Mammary epithelial cell (primary cell): ENCODE measurements at regions of chr3 and their contacts with region 1.

Region 1: DNA sequence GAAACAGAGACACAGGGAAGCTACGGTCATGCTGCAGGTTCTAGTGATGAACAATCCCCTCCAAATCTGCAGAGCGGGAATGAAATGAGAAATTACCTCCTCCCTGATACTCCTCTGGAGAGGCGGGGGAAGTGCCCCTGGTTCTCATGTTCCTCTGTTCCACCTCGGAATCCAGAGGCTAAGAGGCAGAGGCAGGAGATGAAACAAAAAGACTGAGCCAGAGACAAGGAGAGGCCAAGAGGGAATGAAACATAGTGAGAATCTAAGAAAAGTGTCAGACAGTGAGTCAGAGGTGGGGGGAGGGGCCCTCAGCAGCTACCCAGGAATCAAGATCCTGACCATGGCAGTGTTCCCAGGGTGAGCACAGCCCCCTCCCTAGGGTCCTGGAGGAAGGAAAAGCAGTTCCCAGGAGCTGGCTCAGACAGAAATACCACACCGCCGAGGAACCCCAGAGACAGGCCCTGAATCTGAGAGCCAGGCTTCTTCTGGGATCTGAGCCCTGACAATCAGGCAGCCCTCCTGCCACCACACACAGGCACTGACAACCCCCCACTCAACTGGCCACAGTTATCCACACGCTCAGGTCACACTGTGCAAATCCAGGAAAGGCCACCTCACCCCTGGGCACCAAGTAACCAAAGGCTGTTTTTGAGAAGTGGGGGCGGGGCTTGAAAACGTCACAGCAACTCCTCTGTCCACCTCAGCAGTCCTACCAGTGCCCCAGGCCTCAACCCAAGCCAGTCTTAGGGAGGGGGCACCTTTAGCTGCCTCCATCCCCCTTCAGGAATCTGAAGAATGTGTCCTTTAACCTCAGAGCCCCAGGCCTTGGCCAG is 2.4 kb downstream of the CSRNP1 start:
- DNase-seq: peak; percentile 82
- H3K4me3 ChIP-seq: peak overlapping the region; percentile 8 to 89 (median 74)
- H3K27ac ChIP-seq: peak overlapping the region; percentile 88
- H3K4me1 ChIP-seq: peaks cover 67% of the 10 kb centered on the region
- H3K27me3 ChIP-seq: no peaks in the 10 kb centered on the region
- CTCF ChIP-seq: no peak

Region 2: DNA sequence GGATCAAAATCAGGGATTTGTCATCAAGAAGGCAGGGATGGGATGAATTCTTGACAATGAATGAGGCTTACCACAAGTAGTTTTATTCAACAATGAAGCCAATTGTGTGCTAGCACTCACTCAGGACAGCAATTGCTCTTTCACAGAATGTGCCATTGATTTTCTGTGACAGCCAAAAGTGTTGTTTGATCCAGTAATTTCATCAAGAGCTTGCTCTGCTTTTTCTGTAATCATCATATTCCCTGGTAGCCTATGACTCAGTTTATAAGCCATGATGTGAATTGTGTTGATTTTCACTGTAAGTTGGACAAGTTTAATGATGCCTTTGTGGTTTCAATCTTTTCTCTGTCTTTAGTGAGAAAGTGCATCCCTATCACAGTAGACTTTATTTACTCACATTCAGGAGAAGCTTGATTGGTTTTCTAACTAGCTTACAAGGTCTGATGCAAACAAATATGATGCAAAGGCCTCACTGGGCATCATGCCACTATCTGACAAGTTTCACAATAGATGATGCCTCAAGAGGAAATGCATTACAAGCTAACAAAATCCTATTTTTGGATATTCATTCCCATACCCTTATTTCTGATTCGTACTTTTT is 16.0 kb after region 1 on chr3:
- CTCF ChIA-PET with region 1: no interaction called
- dilution Hi-C with region 1: no loop called
- in situ Hi-C with region 1: no loop called
- intact Hi-C with region 1: loop called (anchors 1 kb)
- DNase-seq: peak; percentile 83
- H3K4me3 ChIP-seq: no peak overlapping the region
- H3K27ac ChIP-seq: peak overlapping the region; percentile 33
- H3K4me1 ChIP-seq: peaks cover 18% of the 10 kb centered on the region
- H3K27me3 ChIP-seq: no peaks in the 10 kb centered on the region
- CTCF ChIP-seq: no peak